OCI-LY7 (cell line): ENCODE measurements at regions of chr4 and their contacts with region 1.

Region 1: GRCh38 chr4:70993181-70994068 is at the start of gene DCK:
- DNase-seq: peak; percentile 95
- H3K4me3 ChIP-seq: peak within 1 kb of the TSS; percentile 92
- H3K27ac ChIP-seq: peak within 1 kb of the TSS; percentile 94
- H3K4me1 ChIP-seq: peaks cover 35% of the 10 kb centered on the region
- CTCF ChIP-seq: 0 out of 2 replicates have a peak, but pooled peaks have one; percentile 22
- total RNA-seq, gene DCK: 78.2 and 90.1 TPM in 2 replicates

Region 2: DNA sequence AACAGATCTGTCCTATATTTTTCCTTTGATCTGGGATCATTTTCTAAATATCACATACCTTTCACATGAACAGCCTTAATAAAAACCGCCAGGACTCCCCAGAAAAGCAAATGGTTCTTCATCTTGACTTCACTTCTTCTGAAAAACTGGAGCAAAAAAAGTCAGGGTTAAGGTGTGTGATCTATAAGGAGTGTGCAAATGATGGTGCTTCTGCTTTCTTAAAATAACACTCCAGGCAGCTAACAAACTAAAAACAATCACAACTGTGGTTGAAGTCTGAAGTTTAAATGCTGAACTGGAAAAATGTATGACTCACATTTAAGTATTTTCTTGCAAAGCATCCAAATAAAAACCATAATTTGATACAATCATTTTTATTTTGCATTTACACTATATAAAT is 327.1 kb before region 1 on chr4 and contains the start of gene JCHAIN:
- CTCF ChIA-PET with region 1: no interaction called
- POLR2A ChIA-PET with region 1: interaction called, 40 read pairs
- intact Hi-C with region 1: loop called (anchors 5 kb)
- DNase-seq: peak; percentile 70
- H3K4me3 ChIP-seq: peak within 1 kb of the TSS; percentile 98
- H3K27ac ChIP-seq: peak within 1 kb of the TSS; percentile 91
- H3K4me1 ChIP-seq: peaks cover 60% of the 10 kb centered on the region
- CTCF ChIP-seq: no peak
- total RNA-seq, gene JCHAIN: 1,460 and 1,542 TPM in 2 replicates

Region 3: DNA sequence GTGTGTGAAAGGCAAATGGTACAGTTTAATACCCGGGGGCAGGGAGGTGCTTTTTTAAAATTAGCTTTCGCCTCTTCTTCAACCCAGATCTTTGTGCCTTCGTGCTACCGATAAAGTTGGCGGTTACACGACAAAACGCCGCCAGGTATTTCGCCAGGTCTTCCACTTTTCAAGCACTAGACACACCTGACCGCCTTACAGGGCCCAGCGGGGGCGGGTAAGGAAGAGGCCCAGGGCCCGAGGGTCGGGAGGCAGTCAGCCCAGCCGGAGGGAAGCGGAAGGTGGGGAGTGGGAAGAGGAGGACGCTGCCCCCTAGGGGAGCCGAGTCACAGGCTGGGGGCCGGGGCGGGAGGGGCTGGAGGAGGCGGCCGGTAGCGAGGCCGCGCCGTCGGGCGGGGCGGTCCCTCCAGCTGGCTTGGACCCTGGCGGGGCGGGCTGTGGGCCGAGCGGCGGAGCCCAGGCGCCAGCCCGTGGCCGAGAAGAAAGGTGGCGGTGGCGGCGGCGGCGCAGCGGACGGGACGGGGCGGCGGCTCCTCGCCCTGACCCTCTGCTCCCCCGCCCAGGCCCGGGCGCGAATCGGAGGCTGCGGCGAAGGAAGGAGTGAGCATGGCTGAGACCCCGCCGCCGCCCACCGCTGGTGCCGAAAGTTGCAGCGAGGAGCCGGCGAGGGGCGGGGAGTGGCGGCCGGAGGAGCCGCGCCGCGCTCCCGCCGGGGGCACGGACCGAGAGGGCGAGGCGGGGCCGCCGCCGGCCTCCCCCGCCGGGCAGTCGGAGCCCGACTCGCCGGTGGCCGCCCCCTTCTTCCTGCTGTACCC is 288.9 kb before region 1 on chr4:
- CTCF ChIA-PET with region 1: no interaction called
- POLR2A ChIA-PET with region 1: interaction called, 3 read pairs
- intact Hi-C with region 1: loop called (anchors 5 kb)
- DNase-seq: peak; percentile 85
- H3K4me3 ChIP-seq: peak overlapping the region; percentile 90
- H3K27ac ChIP-seq: peak overlapping the region; percentile 77
- H3K4me1 ChIP-seq: peaks cover 32% of the 10 kb centered on the region
- CTCF ChIP-seq: peak; percentile 71

Region 4: GRCh38 chr4:70839589-70840093 is 153.8 kb before region 1 on chr4 and contains the start of gene GRSF1:
- CTCF ChIA-PET with region 1: no interaction called
- POLR2A ChIA-PET with region 1: interaction called, 6 read pairs
- intact Hi-C with region 1: loop called (anchors 1 kb)
- DNase-seq: peak; percentile 97
- H3K4me3 ChIP-seq: peak within 1 kb of the TSS; percentile 73
- H3K27ac ChIP-seq: peak within 1 kb of the TSS; percentile 76
- H3K4me1 ChIP-seq: peaks cover 41% of the 10 kb centered on the region
- CTCF ChIP-seq: peak; percentile 21; the same call in 1 of the 2 replicates
- total RNA-seq, gene GRSF1: 32.8 and 36.7 TPM in 2 replicates

Region 5: DNA sequence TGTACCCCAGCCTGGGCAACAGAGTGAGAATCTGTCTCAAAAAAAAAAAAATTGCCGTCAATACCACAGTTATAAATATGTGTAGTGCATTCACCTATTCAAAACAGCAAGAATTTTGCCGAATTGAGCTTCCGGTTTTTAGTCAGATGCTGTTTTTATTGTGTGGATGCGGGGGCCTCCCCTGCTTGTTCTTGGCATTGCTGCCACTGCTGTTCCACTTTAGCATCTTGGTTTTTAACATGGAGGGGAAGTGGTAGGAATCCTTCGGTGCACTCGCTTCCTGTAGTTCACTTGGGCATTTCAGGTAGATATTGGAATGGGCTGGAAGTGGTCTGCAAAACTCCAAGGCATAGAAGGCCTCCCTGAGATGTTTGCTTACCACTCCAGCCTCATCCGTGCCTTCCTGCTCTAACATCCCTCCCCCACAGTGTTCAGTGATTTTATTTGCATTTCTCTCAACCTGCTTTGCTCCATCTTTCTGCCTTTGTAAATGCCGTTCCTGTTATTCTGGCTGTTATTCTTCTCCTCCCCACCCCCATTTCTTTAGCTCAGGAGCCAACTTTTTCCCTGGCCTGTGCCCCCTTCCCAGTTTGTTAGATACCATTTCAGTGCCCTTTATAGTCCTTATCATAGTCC is 65.8 kb before region 1 on chr4:
- CTCF ChIA-PET with region 1: interaction called, 3 read pairs
- POLR2A ChIA-PET with region 1: interaction called, 28 read pairs
- intact Hi-C with region 1: loop called (anchors 1 kb)
- DNase-seq: peak; percentile 81
- H3K4me3 ChIP-seq: peak overlapping the region; percentile 63
- H3K27ac ChIP-seq: peak overlapping the region; percentile 88
- H3K4me1 ChIP-seq: peaks cover 94% of the 10 kb centered on the region
- CTCF ChIP-seq: peak; percentile 48

Region 6: GRCh38 chr4:71009890-71010588 is 16.6 kb after region 1 on chr4:
- CTCF ChIA-PET with region 1: interaction called, 12 read pairs
- POLR2A ChIA-PET with region 1: interaction called, 108 read pairs
- intact Hi-C with region 1: loop called (anchors 1 kb)
- DNase-seq: peak; percentile 66
- H3K4me3 ChIP-seq: no peak overlapping the region
- H3K27ac ChIP-seq: peak overlapping the region; percentile 44
- H3K4me1 ChIP-seq: peaks cover 50% of the 10 kb centered on the region
- CTCF ChIP-seq: peak; percentile 96